MCF 10A (cell line): ENCODE measurements at regions of chr20 and their contacts with region 1.

Region 1: DNA sequence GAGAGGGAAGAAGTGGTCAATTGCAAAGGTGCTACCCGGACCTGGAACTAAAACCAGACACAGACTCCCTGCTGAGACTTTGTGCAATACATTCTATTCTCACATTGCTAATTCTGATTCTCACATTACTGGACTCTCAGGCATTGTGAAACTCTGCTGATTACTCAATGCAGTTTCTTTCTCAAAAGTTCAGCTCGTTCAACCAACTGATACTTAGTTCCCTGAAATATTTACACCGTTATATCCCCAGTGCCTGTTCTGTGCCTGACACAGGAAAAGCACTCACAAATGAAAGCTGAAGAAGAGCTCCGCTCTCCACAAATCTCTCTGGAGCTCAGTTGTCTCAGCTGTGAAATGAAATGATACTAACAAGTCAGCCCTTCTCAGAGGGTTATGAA is 504 bp upstream of the SLPI start:
- DNase-seq: peak; percentile 99
- H3K4me3 Mint-ChIP-seq: peak overlapping the region; percentile 79
- H3K27ac Mint-ChIP-seq: peak overlapping the region; percentile 95
- H3K4me1 Mint-ChIP-seq: peaks cover 58% of the 10 kb centered on the region
- H3K27me3 Mint-ChIP-seq: no peaks in the 10 kb centered on the region
- CTCF ChIP-seq: no peak

Region 2: GRCh38 chr20:45128071-45128470 is 126.8 kb before region 1 on chr20:
- CTCF ChIA-PET with region 1: interaction called, 4 read pairs
- POLR2A ChIA-PET with region 1: interaction called, 10 read pairs
- intact Hi-C with region 1: no loop called
- DNase-seq: peak; percentile 27
- H3K4me3 Mint-ChIP-seq: no peak overlapping the region
- H3K27ac Mint-ChIP-seq: no peak overlapping the region
- H3K4me1 Mint-ChIP-seq: no peaks in the 10 kb centered on the region
- H3K27me3 Mint-ChIP-seq: peaks cover 20% of the 10 kb centered on the region
- CTCF ChIP-seq: no peak

Region 3: GRCh38 chr20:45138561-45139300 is 116.1 kb before region 1 on chr20:
- CTCF ChIA-PET with region 1: interaction called, 16 read pairs
- POLR2A ChIA-PET with region 1: interaction called, 6 read pairs
- intact Hi-C with region 1: no loop called
- DNase-seq: peak; percentile 74
- H3K4me3 Mint-ChIP-seq: no peak overlapping the region
- H3K27ac Mint-ChIP-seq: no peak overlapping the region
- H3K4me1 Mint-ChIP-seq: no peaks in the 10 kb centered on the region
- H3K27me3 Mint-ChIP-seq: no peaks in the 10 kb centered on the region
- CTCF ChIP-seq: peak; percentile 85

Region 4: DNA sequence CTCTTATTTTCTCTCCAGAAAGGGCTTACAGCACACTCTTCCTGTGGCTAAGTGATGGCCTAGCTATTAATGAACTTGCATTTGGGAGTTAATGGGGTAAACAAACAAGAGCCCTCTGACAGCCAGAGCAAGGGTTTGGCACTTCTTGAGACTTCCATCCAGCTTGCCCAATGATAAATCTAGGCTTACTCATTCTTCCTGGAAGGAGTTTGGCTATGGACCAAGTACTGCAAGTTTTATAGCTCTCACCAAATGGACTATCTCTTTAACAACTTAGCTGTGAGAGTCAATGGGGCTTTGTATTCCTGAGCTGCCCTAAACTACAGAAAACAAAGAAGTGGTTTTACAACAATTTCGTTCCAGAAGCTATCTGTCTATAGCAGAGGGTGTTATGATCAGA is 96.9 kb before region 1 on chr20:
- CTCF ChIA-PET with region 1: no interaction called
- POLR2A ChIA-PET with region 1: interaction called, 13 read pairs
- intact Hi-C with region 1: no loop called
- DNase-seq: peak; percentile 95
- H3K4me3 Mint-ChIP-seq: no peak overlapping the region
- H3K27ac Mint-ChIP-seq: peak overlapping the region; percentile 47
- H3K4me1 Mint-ChIP-seq: peaks cover 11% of the 10 kb centered on the region
- H3K27me3 Mint-ChIP-seq: no peaks in the 10 kb centered on the region
- CTCF ChIP-seq: no peak

Region 5: DNA sequence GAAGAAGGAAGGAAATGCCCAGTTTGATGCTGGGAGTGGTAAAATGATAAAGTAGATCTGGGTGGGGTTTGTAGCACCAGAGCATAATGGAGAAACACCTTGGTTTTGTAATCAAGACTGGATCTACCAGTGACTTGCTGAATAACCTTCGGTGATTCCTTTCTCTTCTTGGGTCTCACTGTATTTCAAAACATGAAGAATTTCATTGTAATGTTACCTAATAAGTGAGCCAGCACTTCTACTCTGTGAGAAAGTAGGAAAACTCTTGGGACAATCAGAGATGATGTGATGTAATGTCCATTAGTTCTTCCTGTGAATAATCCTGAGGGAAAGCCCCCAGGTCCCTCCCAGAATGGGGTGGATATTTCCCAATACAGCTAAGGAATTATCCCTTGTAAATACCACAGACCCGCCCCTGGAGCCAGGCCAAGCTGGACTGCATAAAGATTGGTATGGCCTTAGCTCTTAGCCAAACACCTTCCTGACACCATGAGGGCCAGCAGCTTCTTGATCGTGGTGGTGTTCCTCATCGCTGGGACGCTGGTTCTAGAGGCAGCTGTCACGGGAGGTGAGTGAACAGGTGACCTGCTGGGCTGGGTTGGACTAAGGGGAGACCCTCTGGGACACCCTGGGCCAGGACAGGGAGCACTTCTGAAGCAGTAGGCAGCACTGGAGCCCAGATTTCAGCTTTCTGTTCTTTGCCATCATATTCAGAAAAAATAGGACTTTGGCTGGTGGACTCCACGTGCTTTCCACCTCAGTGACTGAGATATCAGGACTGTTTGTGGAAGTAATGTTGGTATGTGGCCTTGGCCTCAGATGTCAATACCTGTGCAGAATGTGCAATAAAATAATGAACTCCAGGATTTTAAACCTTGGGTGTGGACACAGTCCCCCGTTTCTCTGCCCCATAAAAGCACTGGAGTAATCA is 80.2 kb before region 1 on chr20 and contains the start of gene PI3:
- CTCF ChIA-PET with region 1: interaction called, 5 read pairs
- POLR2A ChIA-PET with region 1: interaction called, 13 read pairs
- intact Hi-C with region 1: no loop called
- DNase-seq: peak; percentile 99
- H3K4me3 Mint-ChIP-seq: no peak within 1 kb of the TSS
- H3K27ac Mint-ChIP-seq: no peak within 1 kb of the TSS
- H3K4me1 Mint-ChIP-seq: peaks cover 23% of the 10 kb centered on the region
- H3K27me3 Mint-ChIP-seq: no peaks in the 10 kb centered on the region
- CTCF ChIP-seq: no peak
- total RNA-seq, gene PI3: 1.0 and 2.8 TPM in 2 replicates

Region 6: GRCh38 chr20:45235995-45236394 is 18.9 kb before region 1 on chr20:
- CTCF ChIA-PET with region 1: no interaction called
- POLR2A ChIA-PET with region 1: interaction called, 21 read pairs
- intact Hi-C with region 1: no loop called
- DNase-seq: peak; percentile 52
- H3K4me3 Mint-ChIP-seq: no peak overlapping the region
- H3K27ac Mint-ChIP-seq: no peak overlapping the region
- H3K4me1 Mint-ChIP-seq: no peaks in the 10 kb centered on the region
- H3K27me3 Mint-ChIP-seq: peaks cover 37% of the 10 kb centered on the region
- CTCF ChIP-seq: peak; percentile 33

Region 7: GRCh38 chr20:45268531-45268930 is 13.7 kb after region 1 on chr20:
- CTCF ChIA-PET with region 1: interaction called, 5 read pairs
- POLR2A ChIA-PET with region 1: interaction called, 14 read pairs
- intact Hi-C with region 1: no loop called
- DNase-seq: no peak
- H3K4me3 Mint-ChIP-seq: no peak overlapping the region
- H3K27ac Mint-ChIP-seq: no peak overlapping the region
- H3K4me1 Mint-ChIP-seq: peaks cover 7% of the 10 kb centered on the region
- H3K27me3 Mint-ChIP-seq: no peaks in the 10 kb centered on the region
- CTCF ChIP-seq: no peak